GM12878 (cell line): ENCODE measurements at regions of chr3 and their contacts with region 1.

Region 1: GRCh38 chr3:186540221-186540834 is 3.9 kb downstream of the CRYGS start:
- DNase-seq: peak; percentile 76
- ATAC-seq: peak; percentile 84
- H3K4me3 ChIP-seq: no peak overlapping the region
- H3K27ac ChIP-seq: peak overlapping the region; percentile 30
- H3K4me1 ChIP-seq: peaks cover 50% of the 10 kb centered on the region
- H3K27me3 ChIP-seq: no peaks in the 10 kb centered on the region
- CTCF ChIP-seq: peak; percentile 48 to 91 (median 72); a peak in 5 of 6 replicates
- EP300 ChIP-seq: no peak
- POLR2A ChIP-seq: no peak
- RAD21 ChIP-seq: peak; percentile 99

Region 2: DNA sequence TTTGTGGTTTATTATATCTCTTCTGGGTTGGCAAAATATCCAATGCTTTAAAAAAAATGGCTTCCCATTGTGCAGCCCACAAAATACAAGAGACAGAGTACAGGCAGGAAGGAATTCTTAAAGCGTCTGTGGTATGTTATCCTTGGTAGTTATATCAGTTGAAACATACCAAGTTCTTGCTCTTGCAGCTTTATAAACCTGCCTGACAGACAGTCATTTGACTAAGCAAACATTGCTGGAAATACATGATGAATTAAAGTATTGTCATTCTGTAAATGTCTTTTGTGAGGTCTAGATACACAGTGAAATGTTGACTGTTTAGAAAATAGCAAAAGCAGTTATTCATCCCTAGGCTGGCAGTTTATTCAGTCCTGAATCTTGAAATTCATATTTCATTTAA is 1222.2 kb before region 1 on chr3:
- CTCF ChIA-PET with region 1: no interaction called
- POLR2A ChIA-PET with region 1: no interaction called
- RAD21 ChIA-PET with region 1: no interaction called
- SMC1A ChIA-PET with region 1: no interaction called
- in situ Hi-C with region 1: no loop called
- intact Hi-C with region 1: no loop called
- DNase-seq: no peak
- ATAC-seq: peak; percentile 37
- H3K4me3 ChIP-seq: no peak overlapping the region
- H3K27ac ChIP-seq: no peak overlapping the region
- H3K4me1 ChIP-seq: peaks cover 9% of the 10 kb centered on the region; the same call in 1 of the 2 replicates
- H3K27me3 ChIP-seq: no peaks in the 10 kb centered on the region
- CTCF ChIP-seq: no peak
- EP300 ChIP-seq: no peak
- POLR2A ChIP-seq: no peak
- RAD21 ChIP-seq: no peak

Region 3: DNA sequence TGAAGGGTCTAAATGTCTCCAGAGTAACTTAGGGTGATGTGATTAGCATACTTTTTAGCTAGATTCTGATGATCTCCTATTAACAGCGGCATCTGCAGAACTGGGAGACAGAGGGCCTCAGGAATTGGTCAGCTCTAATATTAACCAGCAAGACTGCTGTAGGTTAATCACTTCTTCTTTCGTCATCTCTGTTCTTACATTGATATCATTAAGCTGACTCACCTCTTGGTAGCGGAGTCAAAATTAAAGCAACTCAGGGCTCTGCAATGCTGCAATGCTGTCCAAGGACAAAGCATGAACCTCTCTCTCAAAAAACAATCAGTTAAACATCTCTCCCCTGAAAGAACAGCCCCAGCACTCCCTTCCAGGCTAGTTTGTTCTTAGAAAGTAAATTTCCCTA is 545.0 kb before region 1 on chr3:
- CTCF ChIA-PET with region 1: interaction called, 15 read pairs
- POLR2A ChIA-PET with region 1: no interaction called
- RAD21 ChIA-PET with region 1: interaction called, 4 read pairs
- SMC1A ChIA-PET with region 1: interaction called, 33 read pairs
- in situ Hi-C with region 1: no loop called
- intact Hi-C with region 1: no loop called
- DNase-seq: no peak
- ATAC-seq: no peak
- H3K4me3 ChIP-seq: no peak overlapping the region
- H3K27ac ChIP-seq: no peak overlapping the region
- H3K4me1 ChIP-seq: no peaks in the 10 kb centered on the region
- H3K27me3 ChIP-seq: no peaks in the 10 kb centered on the region; a peak in 1 of 4 replicates
- CTCF ChIP-seq: no peak
- EP300 ChIP-seq: no peak
- POLR2A ChIP-seq: no peak
- RAD21 ChIP-seq: no peak

Region 4: DNA sequence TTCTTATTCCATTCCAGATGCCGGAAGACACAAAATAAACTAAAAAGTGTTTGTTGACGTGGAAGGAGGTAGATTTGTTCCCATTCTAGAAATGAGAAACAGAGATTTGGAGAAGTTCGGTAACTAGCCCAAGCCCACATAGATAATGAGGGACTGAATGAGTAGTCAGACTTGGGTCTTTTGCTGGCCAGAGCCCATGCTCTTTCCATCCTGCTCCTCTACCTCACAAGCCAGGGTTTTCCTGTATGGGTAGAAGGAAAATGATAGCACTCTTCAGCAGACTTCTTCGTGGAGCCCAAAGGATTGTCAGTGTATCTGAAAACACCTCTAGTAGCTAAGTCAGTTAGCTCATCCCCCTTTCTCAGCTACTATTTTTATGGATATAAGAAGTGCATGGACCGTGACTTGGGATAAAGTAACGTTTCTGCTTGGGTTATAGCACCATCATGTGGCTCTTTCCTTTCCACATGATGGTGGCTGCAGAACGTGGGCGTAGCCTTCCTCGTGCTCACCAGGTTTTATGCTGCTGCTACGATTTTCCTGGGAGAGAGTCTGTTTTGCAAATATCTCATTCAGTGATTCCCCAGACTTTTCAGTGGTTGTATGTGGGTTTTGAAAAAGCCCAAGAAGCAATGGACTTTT is 262.9 kb before region 1 on chr3:
- CTCF ChIA-PET with region 1: interaction called, 14 read pairs
- POLR2A ChIA-PET with region 1: no interaction called
- RAD21 ChIA-PET with region 1: interaction called, 10 read pairs
- SMC1A ChIA-PET with region 1: interaction called, 15 read pairs
- in situ Hi-C with region 1: no loop called
- intact Hi-C with region 1: no loop called
- DNase-seq: no peak
- ATAC-seq: no peak
- H3K4me3 ChIP-seq: no peak overlapping the region
- H3K27ac ChIP-seq: no peak overlapping the region
- H3K4me1 ChIP-seq: no peaks in the 10 kb centered on the region; the same call in 1 of the 2 replicates
- H3K27me3 ChIP-seq: peaks cover 0 to 3% of the 10 kb centered on the region in 2 experiments; a peak in 2 of 4 replicates
- CTCF ChIP-seq: no peak
- EP300 ChIP-seq: no peak
- POLR2A ChIP-seq: no peak
- RAD21 ChIP-seq: no peak

Region 5: GRCh38 chr3:186456731-186457191 is 83.6 kb before region 1 on chr3:
- CTCF ChIA-PET with region 1: interaction called, 12 read pairs
- POLR2A ChIA-PET with region 1: no interaction called
- RAD21 ChIA-PET with region 1: interaction called, 18 read pairs
- SMC1A ChIA-PET with region 1: interaction called, 28 read pairs
- in situ Hi-C with region 1: no loop called
- intact Hi-C with region 1: loop called (anchors 5 kb)
- DNase-seq: no peak
- ATAC-seq: no peak
- H3K4me3 ChIP-seq: no peak overlapping the region
- H3K27ac ChIP-seq: no peak overlapping the region
- H3K4me1 ChIP-seq: no peaks in the 10 kb centered on the region
- H3K27me3 ChIP-seq: peaks cover 0 to 2% of the 10 kb centered on the region in 2 experiments; a peak in 1 of 4 replicates
- CTCF ChIP-seq: no peak
- EP300 ChIP-seq: no peak
- POLR2A ChIP-seq: no peak
- RAD21 ChIP-seq: no peak

Region 6: DNA sequence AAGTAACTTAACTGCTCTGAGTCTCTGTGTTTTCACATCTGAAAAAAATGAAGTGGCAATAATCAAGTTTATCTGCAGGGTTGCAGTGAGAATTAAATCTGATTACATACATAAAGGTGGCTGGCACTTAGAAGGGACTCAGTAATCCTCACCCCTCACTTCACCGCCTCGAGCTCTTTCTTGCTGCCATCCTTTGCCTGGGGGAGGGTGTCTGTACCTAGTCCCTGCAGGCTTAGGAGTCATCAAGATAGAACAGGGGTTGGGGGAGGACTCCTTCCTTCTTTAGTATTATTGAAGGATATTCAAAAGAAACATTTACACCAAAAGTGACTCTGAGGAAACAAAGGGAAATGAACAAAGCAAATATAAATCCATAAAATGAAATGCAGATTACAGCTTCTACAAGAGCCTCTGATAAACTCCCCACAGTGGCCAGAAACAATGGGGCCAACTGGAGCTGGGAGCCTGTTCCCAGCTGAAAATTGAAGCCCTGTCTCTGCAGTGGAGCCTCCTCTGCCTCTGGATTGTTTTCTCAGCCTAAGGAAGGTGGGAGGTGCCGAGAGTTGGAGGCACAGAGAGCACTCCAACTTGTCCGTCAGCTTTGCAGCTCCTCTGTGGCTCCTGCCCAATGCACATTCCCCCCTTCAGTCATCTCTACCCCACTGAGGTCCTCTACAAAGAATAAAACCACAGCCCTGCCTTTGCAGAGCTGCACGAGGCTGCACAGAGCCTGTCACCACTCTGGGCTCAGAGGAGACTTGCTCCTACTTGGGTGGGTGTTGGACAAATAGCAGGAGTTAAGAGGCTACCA is 38.0 kb before region 1 on chr3:
- CTCF ChIA-PET with region 1: interaction called, 141 read pairs
- POLR2A ChIA-PET with region 1: interaction called, 3 read pairs
- RAD21 ChIA-PET with region 1: interaction called, 192 read pairs
- SMC1A ChIA-PET with region 1: interaction called, 257 read pairs
- in situ Hi-C with region 1: no loop called
- intact Hi-C with region 1: no loop called
- DNase-seq: no peak
- ATAC-seq: peak; percentile 61
- H3K4me3 ChIP-seq: no peak overlapping the region
- H3K27ac ChIP-seq: no peak overlapping the region
- H3K4me1 ChIP-seq: no peaks in the 10 kb centered on the region
- H3K27me3 ChIP-seq: no peaks in the 10 kb centered on the region
- CTCF ChIP-seq: no peak
- EP300 ChIP-seq: no peak
- POLR2A ChIP-seq: no peak
- RAD21 ChIP-seq: no peak

Region 7: DNA sequence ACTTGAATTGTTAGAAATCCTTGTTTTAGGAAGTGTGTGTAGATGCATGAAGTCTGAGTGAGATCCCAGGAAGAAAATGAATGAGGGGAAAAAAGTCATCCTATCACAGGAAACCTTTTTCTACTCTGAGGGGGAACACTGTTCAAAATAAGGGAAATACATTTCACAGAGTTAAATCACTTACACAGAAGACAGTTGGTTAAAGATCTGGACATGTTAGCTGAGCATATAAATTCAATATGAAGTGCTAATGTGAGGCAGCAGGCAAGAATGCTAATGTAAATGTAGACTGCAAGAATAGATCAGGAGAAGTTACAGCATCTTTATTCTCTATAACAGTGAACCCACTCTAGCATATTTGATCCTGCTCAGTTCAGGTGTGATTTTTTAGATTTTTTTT is 24.3 kb after region 1 on chr3:
- CTCF ChIA-PET with region 1: interaction called, 17 read pairs
- POLR2A ChIA-PET with region 1: interaction called, 20 read pairs
- RAD21 ChIA-PET with region 1: interaction called, 28 read pairs
- SMC1A ChIA-PET with region 1: interaction called, 36 read pairs
- in situ Hi-C with region 1: no loop called
- intact Hi-C with region 1: no loop called
- DNase-seq: no peak
- ATAC-seq: no peak
- H3K4me3 ChIP-seq: no peak overlapping the region
- H3K27ac ChIP-seq: no peak overlapping the region
- H3K4me1 ChIP-seq: peaks cover 6% of the 10 kb centered on the region
- H3K27me3 ChIP-seq: no peaks in the 10 kb centered on the region
- CTCF ChIP-seq: no peak
- EP300 ChIP-seq: no peak
- POLR2A ChIP-seq: no peak
- RAD21 ChIP-seq: no peak